ENCODE measurements at regions of chr6 and their contacts with region 1.

Region 1: GRCh38 chr6:38004908-38005307 is 185.4 kb downstream of the ZFAND3 start:
- DNase-seq: no peak
- H3K4me3 ChIP-seq: no peak overlapping the region
- H3K4me3 Mint-ChIP-seq: no peak overlapping the region
- H3K27ac ChIP-seq: no peak overlapping the region
- H3K27ac Mint-ChIP-seq: no peak overlapping the region
- H3K4me1 ChIP-seq: no peaks in the 10 kb centered on the region
- H3K4me1 Mint-ChIP-seq: peaks cover 19 to 63% (median 61%) of the 10 kb centered on the region in 3 donors
- H3K27me3 ChIP-seq: no peaks in the 10 kb centered on the region
- H3K27me3 Mint-ChIP-seq: no peaks in the 10 kb centered on the region

Region 2: GRCh38 chr6:37792457-37793033 is 212.4 kb before region 1 on chr6:
- CTCF ChIA-PET with region 1: no interaction called
- POLR2A ChIA-PET with region 1: interaction called, 10 read pairs
- DNase-seq: no peak
- H3K4me3 ChIP-seq: no peak overlapping the region
- H3K4me3 Mint-ChIP-seq: no peak overlapping the region
- H3K27ac ChIP-seq: no peak overlapping the region
- H3K27ac Mint-ChIP-seq: no peak overlapping the region
- H3K4me1 ChIP-seq: peaks cover 7% of the 10 kb centered on the region
- H3K4me1 Mint-ChIP-seq: peaks cover 0 to 11% (median 6%) of the 10 kb centered on the region in 3 donors
- H3K27me3 ChIP-seq: no peaks in the 10 kb centered on the region
- H3K27me3 Mint-ChIP-seq: peaks cover 0 to 3% of the 10 kb centered on the region in 2 donors

Measured in CD8-positive, alpha-beta memory T cell (primary cell).